ENCODE measurements at regions of chr13 and their contacts with region 1.

Region 1: GRCh38 chr13:30142486-30143211 is 164.7 kb downstream of the KATNAL1 start:
- DNase-seq: peak; percentile 99
- H3K4me3 ChIP-seq: no peak overlapping the region
- H3K27me3 ChIP-seq: no peaks in the 10 kb centered on the region; the same call in 1 of the 2 replicates
- CTCF ChIP-seq: no peak

Region 2: GRCh38 chr13:30125422-30126073 is 17.1 kb before region 1 on chr13:
- CTCF ChIA-PET with region 1: interaction called, 11 read pairs
- POLR2A ChIA-PET with region 1: interaction called, 7 read pairs
- DNase-seq: peak; percentile 84
- H3K4me3 ChIP-seq: no peak overlapping the region
- H3K27me3 ChIP-seq: no peaks in the 10 kb centered on the region
- CTCF ChIP-seq: no peak

Region 3: GRCh38 chr13:30158774-30159445 is 16.3 kb after region 1 on chr13:
- CTCF ChIA-PET with region 1: interaction called, 12 read pairs
- POLR2A ChIA-PET with region 1: no interaction called
- DNase-seq: no peak
- H3K4me3 ChIP-seq: no peak overlapping the region
- H3K27me3 ChIP-seq: no peaks in the 10 kb centered on the region
- CTCF ChIP-seq: peak; percentile 58

Measured in BJ (cell line).